Panc1 (cell line): ENCODE measurements at regions of chrX and their contacts with region 1.

Region 1: DNA sequence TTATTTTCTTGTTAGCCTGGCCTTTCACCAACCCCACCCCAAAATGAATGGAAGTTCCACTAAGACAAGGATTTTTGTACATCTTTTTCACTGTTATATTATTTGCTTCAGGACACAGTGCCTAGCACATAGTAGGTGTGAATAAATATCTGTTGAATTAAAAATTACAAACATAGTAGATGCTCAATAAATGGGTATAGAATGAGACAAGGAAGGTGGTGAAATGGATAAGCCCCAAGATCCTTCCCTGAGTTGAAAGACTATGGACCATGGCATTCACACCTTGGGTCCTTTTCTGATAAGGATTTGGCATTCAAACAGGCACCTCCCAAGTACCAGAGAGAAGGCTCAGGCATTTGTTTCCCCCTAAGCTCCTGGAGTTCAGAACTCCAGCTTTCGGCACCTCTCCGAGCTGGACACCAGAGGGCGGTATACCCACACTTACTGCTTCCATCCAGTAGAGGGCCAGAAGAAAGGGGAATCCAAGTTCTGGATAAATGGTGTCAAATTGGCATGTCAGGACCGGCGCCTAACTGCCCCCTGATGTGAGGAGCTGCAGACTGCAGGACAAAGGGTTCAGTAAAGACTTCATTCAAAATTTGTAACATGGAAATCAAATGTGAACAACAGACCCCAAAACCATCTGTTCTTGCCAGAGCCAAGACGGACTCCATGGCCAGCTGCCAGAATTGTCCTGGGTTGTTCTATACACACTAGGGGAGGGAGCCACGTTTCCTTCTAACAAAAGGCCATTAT is 193.0 kb downstream of the GPC3 start:
- DNase-seq: peak; percentile 66
- ATAC-seq: peak; percentile 87
- H3K4me3 ChIP-seq: peak overlapping the region in 1 of 2 experiments; percentile 23; a peak in 1 of 4 replicates
- H3K27ac ChIP-seq: no peak overlapping the region
- H3K4me1 ChIP-seq: no peaks in the 10 kb centered on the region
- H3K27me3 ChIP-seq: no peaks in the 10 kb centered on the region
- CTCF ChIP-seq: peak; percentile 91

Region 2: GRCh38 chrX:133375615-133376340 is 416.6 kb before region 1 on chrX:
- CTCF ChIA-PET with region 1: no interaction called
- POLR2A ChIA-PET with region 1: no interaction called
- in situ Hi-C with region 1: no loop called
- intact Hi-C with region 1: no loop called
- DNase-seq: no peak
- ATAC-seq: no peak
- H3K4me3 ChIP-seq: no peak overlapping the region
- H3K27ac ChIP-seq: no peak overlapping the region
- H3K4me1 ChIP-seq: no peaks in the 10 kb centered on the region
- H3K27me3 ChIP-seq: no peaks in the 10 kb centered on the region; the same call in 1 of the 2 replicates
- CTCF ChIP-seq: no peak

Region 3: DNA sequence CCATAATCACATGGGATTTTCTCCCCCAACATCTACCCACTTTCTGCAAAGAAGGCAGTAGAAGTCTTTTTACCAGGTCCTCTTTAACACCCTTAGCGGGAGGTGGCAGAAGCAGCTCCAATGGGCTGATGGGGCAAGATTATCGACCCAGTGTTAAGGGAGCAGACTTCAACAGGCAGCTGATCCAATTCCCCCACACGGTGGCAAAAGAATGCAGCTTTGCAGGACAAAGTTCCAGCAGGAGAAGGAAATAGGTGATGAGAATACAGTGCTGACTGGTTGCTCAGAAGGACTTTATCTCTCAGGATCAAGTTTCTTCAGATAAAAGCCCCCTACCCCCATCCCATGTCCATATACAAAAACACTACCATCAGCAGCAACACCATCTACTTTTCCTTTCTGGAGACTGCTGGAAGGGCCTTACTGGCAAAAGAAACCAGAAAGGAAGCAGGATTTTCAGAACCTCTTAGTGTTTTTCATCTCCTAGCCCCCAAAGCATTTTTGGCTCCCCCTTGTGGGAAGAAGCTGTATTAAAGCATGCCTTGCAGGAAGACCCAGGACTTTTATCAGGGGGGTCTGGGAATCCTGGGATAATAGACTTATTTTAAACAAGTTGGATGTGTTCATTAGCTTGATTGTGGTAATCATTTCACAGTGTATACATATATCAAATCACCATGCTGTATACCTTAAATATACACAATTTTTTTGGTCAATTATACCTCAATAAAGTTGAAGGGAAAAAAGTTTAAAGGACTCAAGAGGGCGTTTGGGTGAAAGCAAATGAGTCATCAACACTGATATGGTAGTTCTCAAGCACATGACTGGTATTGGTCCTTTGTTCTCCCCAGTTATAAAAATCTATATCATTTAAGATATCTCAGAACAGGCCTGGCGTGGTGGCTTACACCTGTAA is 46.6 kb after region 1 on chrX:
- CTCF ChIA-PET with region 1: no interaction called
- POLR2A ChIA-PET with region 1: no interaction called
- in situ Hi-C with region 1: no loop called
- intact Hi-C with region 1: loop called (anchors 5 kb)
- DNase-seq: peak; percentile 5
- ATAC-seq: no peak
- H3K4me3 ChIP-seq: no peak overlapping the region
- H3K27ac ChIP-seq: no peak overlapping the region
- H3K4me1 ChIP-seq: no peaks in the 10 kb centered on the region
- H3K27me3 ChIP-seq: no peaks in the 10 kb centered on the region; the same call in 1 of the 2 replicates
- CTCF ChIP-seq: peak; percentile 80

Region 4: GRCh38 chrX:133921764-133922389 is 129.5 kb after region 1 on chrX:
- CTCF ChIA-PET with region 1: interaction called, 3 read pairs
- POLR2A ChIA-PET with region 1: no interaction called
- in situ Hi-C with region 1: no loop called
- intact Hi-C with region 1: loop called (anchors 1 kb)
- DNase-seq: peak; percentile 12
- ATAC-seq: peak; percentile 88
- H3K4me3 ChIP-seq: no peak overlapping the region
- H3K27ac ChIP-seq: no peak overlapping the region
- H3K4me1 ChIP-seq: no peaks in the 10 kb centered on the region
- H3K27me3 ChIP-seq: no peaks in the 10 kb centered on the region; the same call in 1 of the 2 replicates
- CTCF ChIP-seq: peak; percentile 82

Region 5: GRCh38 chrX:134026565-134027311 is 234.4 kb after region 1 on chrX:
- CTCF ChIA-PET with region 1: interaction called, 10 read pairs
- POLR2A ChIA-PET with region 1: no interaction called
- in situ Hi-C with region 1: no loop called
- intact Hi-C with region 1: loop called (anchors 2 kb)
- DNase-seq: peak; percentile 13
- ATAC-seq: peak; percentile 82
- H3K4me3 ChIP-seq: peak overlapping the region; percentile 12 to 46; a peak in 3 of 4 replicates
- H3K27ac ChIP-seq: no peak overlapping the region
- H3K4me1 ChIP-seq: no peaks in the 10 kb centered on the region
- H3K27me3 ChIP-seq: peaks cover 2% of the 10 kb centered on the region; the same call in 1 of the 2 replicates
- CTCF ChIP-seq: peak; percentile 72

Region 6: GRCh38 chrX:134144231-134144630 is 351.9 kb after region 1 on chrX:
- CTCF ChIA-PET with region 1: interaction called, 6 read pairs
- POLR2A ChIA-PET with region 1: no interaction called
- in situ Hi-C with region 1: no loop called
- intact Hi-C with region 1: loop called (anchors 10 kb)
- DNase-seq: no peak
- ATAC-seq: 0 out of 2 replicates have a peak, but pooled peaks have one; percentile 62
- H3K4me3 ChIP-seq: no peak overlapping the region
- H3K27ac ChIP-seq: no peak overlapping the region
- H3K4me1 ChIP-seq: no peaks in the 10 kb centered on the region
- H3K27me3 ChIP-seq: peaks cover 5% of the 10 kb centered on the region
- CTCF ChIP-seq: peak; percentile 62